Endothelial cell of umbilical vein (primary cell): ENCODE measurements at regions of chr20 and their contacts with region 1.

Region 1: DNA sequence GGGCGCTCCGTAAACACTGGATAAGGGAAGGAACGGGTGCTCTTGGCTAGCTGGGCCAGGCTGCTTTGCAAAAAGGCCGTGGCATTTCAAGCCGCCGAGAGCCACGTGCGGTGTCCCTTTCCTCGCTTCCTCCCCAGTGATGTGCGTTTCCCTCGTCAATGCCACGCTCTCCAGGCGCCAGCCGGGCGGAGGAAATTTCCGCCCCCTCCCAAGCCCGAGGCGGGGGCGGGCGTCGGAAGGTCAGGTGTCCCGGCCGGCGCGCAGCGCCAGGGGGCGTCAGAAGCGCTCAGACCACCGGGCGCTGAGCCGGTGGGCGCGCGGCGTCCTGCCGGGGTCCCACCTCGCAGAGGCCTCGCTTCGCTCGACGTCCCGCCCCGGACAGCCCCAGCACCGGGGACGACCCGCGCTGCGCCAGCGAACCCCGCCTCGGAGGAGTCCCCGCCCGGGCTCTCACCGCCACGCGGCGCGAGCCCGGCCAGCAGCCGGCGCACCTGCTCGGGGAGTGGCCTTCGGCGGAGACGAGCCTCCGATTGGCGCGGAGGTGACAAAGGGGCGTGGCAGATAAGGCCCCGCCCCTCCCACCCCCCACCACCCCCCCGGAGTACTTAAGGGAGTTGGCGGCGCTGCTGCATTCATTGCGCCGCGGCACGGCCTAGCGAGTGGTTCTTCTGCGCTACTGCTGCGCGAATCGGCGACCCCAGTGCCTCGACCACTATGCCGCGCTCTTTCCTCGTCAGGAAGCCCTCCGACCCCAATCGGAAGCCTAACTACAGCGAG is at the start of gene SNAI1:
- DNase-seq: peak; percentile 84
- H3K4me3 ChIP-seq: peak within 1 kb of the TSS; percentile 49 to 97 (median 89)
- H3K27ac ChIP-seq: peak within 1 kb of the TSS; percentile 87
- H3K4me1 ChIP-seq: peaks cover 49% of the 10 kb centered on the region
- H3K27me3 ChIP-seq: no peaks in the 10 kb centered on the region
- CTCF ChIP-seq: peak; percentile 61 to 68
- POLR2A ChIP-seq: peak; percentile 99
- total RNA-seq, gene SNAI1: 13.4 and 14.5 TPM in 2 replicates

Region 2: GRCh38 chr20:50003253-50003656 is 20.7 kb after region 1 on chr20:
- CTCF ChIA-PET with region 1: interaction called, 10 read pairs
- POLR2A ChIA-PET with region 1: no interaction called
- dilution Hi-C with region 1: no loop called
- intact Hi-C with region 1: no loop called
- DNase-seq: no peak
- H3K4me3 ChIP-seq: no peak overlapping the region
- H3K27ac ChIP-seq: no peak overlapping the region
- H3K4me1 ChIP-seq: no peaks in the 10 kb centered on the region
- H3K27me3 ChIP-seq: no peaks in the 10 kb centered on the region
- CTCF ChIP-seq: no peak
- POLR2A ChIP-seq: no peak

Region 3: DNA sequence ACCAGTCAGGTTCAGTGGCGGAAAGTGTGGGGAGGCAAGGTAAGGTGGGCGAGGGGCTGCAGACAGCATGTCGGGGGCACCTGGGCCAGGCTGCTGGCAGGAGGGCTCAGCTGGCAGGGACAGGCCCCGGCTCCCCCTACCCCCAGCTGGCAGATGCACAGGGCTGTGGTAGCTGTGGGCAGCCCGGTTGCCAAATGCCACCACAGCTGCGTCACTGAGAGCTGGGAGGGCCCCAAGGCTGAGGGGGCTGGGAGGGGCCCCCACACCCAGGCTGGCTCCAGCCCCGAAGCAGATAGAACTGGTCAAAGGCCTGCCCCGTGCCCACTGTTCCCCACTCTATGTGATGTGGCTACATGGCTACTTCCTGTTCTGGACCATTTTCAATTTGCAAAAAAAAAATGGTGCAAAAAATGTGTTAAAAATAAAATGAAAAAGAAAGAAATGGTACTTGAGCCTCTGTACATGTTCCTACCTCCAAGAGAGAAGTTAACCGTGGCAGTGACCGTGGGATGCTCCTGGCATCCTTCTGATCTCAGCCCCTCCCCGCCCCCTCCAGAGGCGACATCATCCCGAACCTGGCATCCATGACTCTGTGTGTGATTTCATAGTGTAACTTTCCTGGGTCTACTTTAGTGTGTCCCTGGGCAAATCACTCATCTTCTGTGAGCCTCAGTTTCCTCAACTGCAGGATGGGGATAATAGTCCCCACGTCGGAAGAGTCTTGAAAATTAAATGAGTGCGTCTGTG is 66.1 kb after region 1 on chr20:
- CTCF ChIA-PET with region 1: interaction called, 12 read pairs
- POLR2A ChIA-PET with region 1: interaction called, 8 read pairs
- dilution Hi-C with region 1: no loop called
- intact Hi-C with region 1: loop called (anchors 1 kb)
- DNase-seq: no peak
- H3K4me3 ChIP-seq: no peak overlapping the region
- H3K27ac ChIP-seq: peak overlapping the region; percentile 96
- H3K4me1 ChIP-seq: peaks cover 26% of the 10 kb centered on the region
- H3K27me3 ChIP-seq: no peaks in the 10 kb centered on the region
- CTCF ChIP-seq: no peak
- POLR2A ChIP-seq: no peak

Region 4: GRCh38 chr20:50110141-50110925 is 127.8 kb after region 1 on chr20:
- CTCF ChIA-PET with region 1: interaction called, 23 read pairs
- POLR2A ChIA-PET with region 1: interaction called, 3 read pairs
- dilution Hi-C with region 1: no loop called
- intact Hi-C with region 1: no loop called
- DNase-seq: peak; percentile 83
- H3K4me3 ChIP-seq: no peak overlapping the region
- H3K27ac ChIP-seq: peak overlapping the region; percentile 84
- H3K4me1 ChIP-seq: peaks cover 67% of the 10 kb centered on the region
- H3K27me3 ChIP-seq: no peaks in the 10 kb centered on the region
- CTCF ChIP-seq: no peak
- POLR2A ChIP-seq: no peak

Region 5: DNA sequence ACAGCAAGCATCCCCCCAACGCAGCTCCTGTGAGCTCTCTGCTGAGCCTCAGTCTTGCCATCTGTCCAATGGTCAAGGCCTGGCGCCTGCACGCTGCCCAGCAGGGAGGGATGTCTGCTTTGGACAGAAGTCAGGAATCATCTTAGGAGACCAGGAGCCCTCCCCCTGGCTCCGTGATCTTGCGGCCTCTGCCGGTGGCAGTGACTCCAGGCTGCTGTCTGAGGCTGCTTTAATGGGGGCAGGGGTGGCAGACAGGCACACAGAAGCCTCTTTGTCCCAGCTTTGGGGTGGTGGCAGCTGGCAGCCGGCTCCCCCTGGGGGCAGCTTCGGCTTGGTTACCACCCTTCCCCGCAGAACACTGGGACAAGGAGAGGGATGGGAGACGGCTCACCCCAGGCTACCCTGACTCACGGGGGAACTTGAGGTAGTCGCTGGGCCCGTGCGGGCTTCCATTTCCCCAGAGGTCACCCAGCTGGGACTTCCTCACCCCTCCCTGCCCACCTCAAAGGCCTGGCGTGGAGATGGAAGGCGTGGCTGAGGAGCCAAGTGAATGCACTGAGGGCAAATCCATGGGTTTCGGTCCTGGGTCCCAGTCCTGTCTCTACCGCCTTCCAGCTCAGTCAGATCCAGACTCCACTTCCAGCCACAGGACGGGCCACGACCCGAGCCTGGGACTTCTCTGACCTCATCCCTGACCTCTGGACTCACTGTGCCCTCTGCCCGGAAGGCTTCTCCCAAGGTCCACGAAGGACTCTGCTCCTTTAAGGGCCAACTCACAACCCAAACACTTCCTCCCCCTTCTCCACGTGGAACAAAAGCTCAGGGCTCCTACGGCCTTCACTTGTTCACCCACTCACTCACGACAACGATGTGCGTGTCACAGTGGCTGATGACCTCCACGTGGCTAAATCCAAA is 156.2 kb after region 1 on chr20:
- CTCF ChIA-PET with region 1: interaction called, 14 read pairs
- POLR2A ChIA-PET with region 1: interaction called, 3 read pairs
- dilution Hi-C with region 1: no loop called
- intact Hi-C with region 1: no loop called
- DNase-seq: no peak
- H3K4me3 ChIP-seq: no peak overlapping the region
- H3K27ac ChIP-seq: peak overlapping the region; percentile 3
- H3K4me1 ChIP-seq: peaks cover 39% of the 10 kb centered on the region
- H3K27me3 ChIP-seq: no peaks in the 10 kb centered on the region
- CTCF ChIP-seq: peak in 1 of 2 donors; percentile 21
- POLR2A ChIP-seq: no peak

Region 6: DNA sequence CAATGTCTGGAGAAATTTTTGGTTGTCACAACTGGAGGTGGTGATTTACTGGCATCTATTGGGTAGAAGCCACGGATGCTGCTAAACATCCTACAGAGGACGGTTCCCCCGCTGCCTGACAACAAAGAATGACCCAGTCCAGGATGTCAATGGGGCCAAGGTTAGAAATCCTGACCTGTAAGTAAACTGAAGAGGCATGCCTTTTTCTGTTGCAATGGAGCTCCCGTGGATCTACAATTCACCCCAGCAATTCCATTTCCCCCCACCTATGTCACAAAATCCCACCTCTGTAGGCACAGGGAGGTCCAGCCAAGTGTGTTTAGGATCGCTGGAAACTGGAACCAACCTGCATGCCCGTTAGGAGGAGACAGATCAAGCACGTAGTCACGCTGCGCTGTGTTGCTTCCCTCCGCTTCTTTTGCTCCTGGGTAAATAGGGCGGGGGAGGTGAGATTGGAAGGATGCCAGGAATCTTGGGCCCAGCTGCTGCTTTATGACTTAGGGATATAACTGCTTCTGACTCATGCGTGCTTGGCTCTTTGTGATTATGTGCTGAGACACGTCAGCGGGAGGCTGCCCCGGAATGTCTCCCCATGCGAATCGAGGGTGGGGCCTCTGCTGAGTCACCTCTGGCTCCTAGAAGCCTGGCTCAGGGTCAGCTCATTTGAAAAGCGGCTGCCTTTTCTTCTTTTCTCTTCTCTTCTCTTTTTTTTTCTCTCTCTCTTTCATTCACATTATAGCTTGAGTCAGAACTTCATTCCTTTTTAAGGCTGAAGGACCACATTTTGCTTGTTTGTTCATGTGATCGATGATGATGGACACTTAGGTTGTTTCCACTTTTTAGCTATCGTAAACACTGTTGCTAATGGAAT is 183.4 kb after region 1 on chr20:
- CTCF ChIA-PET with region 1: interaction called, 61 read pairs
- POLR2A ChIA-PET with region 1: no interaction called
- dilution Hi-C with region 1: no loop called
- intact Hi-C with region 1: loop called (anchors 1 kb)
- DNase-seq: peak; percentile 100
- H3K4me3 ChIP-seq: peak overlapping the region in 2 of 3 experiments; percentile 14 to 37
- H3K27ac ChIP-seq: peak overlapping the region; percentile 89
- H3K4me1 ChIP-seq: peaks cover 12% of the 10 kb centered on the region
- H3K27me3 ChIP-seq: no peaks in the 10 kb centered on the region
- CTCF ChIP-seq: no peak
- POLR2A ChIP-seq: peak; percentile 78

Region 7: GRCh38 chr20:50540620-50541605 is 558.4 kb after region 1 on chr20:
- CTCF ChIA-PET with region 1: no interaction called
- POLR2A ChIA-PET with region 1: no interaction called
- dilution Hi-C with region 1: no loop called
- intact Hi-C with region 1: no loop called
- DNase-seq: peak; percentile 94
- H3K4me3 ChIP-seq: peak overlapping the region in 1 of 3 experiments; percentile 34
- H3K27ac ChIP-seq: peak overlapping the region; percentile 98
- H3K4me1 ChIP-seq: peaks cover 51% of the 10 kb centered on the region
- H3K27me3 ChIP-seq: no peaks in the 10 kb centered on the region
- CTCF ChIP-seq: peak; percentile 10 to 14
- POLR2A ChIP-seq: peak; percentile 71